Gastrocnemius medialis (tissue), 4 donors: ENCODE measurements at regions of chr9 and their contacts with region 1.

Region 1: GRCh38 chr9:127199001-127199791 is 65.4 kb upstream of the GARNL3 start:
- DNase-seq: peak; percentile 47 to 73
- ATAC-seq: peak; percentile 69 to 75
- H3K4me3 ChIP-seq: no peak overlapping the region
- H3K27ac ChIP-seq: peak overlapping the region in 2 of 4 donors; percentile 7 to 51
- H3K4me1 ChIP-seq: peaks cover 29 to 41% of the 10 kb centered on the region in 2 donors
- H3K27me3 ChIP-seq: no peaks in the 10 kb centered on the region
- CTCF ChIP-seq: peak; percentile 87 to 99 (median 94)
- POLR2A ChIP-seq: no peak

Region 2: DNA sequence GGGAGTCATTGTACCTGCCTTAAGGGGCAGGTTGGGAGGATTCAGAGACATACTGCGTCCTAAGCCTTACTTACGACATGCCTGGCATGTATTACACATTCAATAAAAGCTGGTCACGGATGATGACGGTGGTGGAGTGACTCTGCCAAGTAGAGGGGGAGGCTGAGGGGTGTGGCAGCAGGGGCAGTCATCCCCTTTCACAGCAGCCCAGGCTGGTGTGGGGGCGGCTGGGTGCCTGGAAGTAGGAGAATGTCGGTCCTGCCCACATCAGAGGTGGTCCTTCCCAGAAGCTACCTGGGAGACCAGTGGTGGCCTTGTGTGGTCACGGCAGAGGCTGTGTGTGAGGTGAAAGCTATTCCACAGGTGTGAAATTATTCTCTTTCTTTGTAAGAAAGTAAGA is 329.8 kb before region 1 on chr9:
- in situ Hi-C with region 1: no loop called
- intact Hi-C with region 1: no loop called
- DNase-seq: no peak
- ATAC-seq: no peak
- H3K4me3 ChIP-seq: no peak overlapping the region
- H3K27ac ChIP-seq: no peak overlapping the region
- H3K4me1 ChIP-seq: peaks cover 47% of the 10 kb centered on the region in 2 donors
- H3K27me3 ChIP-seq: no peaks in the 10 kb centered on the region
- CTCF ChIP-seq: no peak
- POLR2A ChIP-seq: no peak

Region 3: DNA sequence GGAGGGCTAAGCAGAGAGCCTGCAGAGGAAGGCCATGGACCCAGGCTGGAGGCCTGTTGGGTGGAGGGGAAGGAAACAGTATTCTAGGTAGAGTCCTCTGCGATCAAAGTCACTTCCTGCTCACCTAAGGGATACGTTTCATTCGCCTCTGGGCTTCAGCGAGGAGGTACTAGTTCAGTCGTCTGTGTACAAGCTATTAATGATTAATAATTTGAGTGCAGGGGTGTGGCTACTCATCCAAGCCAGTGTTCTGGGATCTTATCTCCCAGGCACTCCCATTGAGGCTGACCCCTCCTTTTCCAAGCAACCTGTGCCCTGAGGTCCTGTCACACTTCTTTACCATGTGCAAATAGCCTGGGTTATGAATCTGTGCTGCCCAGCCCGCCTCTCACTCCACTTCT is 259.4 kb before region 1 on chr9:
- in situ Hi-C with region 1: loop called (anchors 5 kb)
- intact Hi-C with region 1: loop called (anchors 1 kb)
- DNase-seq: no peak
- ATAC-seq: no peak
- H3K4me3 ChIP-seq: no peak overlapping the region
- H3K27ac ChIP-seq: no peak overlapping the region
- H3K4me1 ChIP-seq: peaks cover 0 to 14% of the 10 kb centered on the region in 2 donors
- H3K27me3 ChIP-seq: no peaks in the 10 kb centered on the region
- CTCF ChIP-seq: no peak
- POLR2A ChIP-seq: no peak

Region 4: GRCh38 chr9:126965541-126966428 is 233.4 kb before region 1 on chr9:
- in situ Hi-C with region 1: no loop called
- intact Hi-C with region 1: loop called (anchors 2 kb)
- DNase-seq: peak; percentile 24 to 66
- ATAC-seq: peak; percentile 80 to 93
- H3K4me3 ChIP-seq: no peak overlapping the region
- H3K27ac ChIP-seq: peak overlapping the region in 2 of 4 donors; percentile 16 to 29
- H3K4me1 ChIP-seq: peaks cover 19 to 41% of the 10 kb centered on the region in 2 donors
- H3K27me3 ChIP-seq: no peaks in the 10 kb centered on the region
- CTCF ChIP-seq: peak; percentile 71 to 84 (median 80)
- POLR2A ChIP-seq: no peak

Region 5: DNA sequence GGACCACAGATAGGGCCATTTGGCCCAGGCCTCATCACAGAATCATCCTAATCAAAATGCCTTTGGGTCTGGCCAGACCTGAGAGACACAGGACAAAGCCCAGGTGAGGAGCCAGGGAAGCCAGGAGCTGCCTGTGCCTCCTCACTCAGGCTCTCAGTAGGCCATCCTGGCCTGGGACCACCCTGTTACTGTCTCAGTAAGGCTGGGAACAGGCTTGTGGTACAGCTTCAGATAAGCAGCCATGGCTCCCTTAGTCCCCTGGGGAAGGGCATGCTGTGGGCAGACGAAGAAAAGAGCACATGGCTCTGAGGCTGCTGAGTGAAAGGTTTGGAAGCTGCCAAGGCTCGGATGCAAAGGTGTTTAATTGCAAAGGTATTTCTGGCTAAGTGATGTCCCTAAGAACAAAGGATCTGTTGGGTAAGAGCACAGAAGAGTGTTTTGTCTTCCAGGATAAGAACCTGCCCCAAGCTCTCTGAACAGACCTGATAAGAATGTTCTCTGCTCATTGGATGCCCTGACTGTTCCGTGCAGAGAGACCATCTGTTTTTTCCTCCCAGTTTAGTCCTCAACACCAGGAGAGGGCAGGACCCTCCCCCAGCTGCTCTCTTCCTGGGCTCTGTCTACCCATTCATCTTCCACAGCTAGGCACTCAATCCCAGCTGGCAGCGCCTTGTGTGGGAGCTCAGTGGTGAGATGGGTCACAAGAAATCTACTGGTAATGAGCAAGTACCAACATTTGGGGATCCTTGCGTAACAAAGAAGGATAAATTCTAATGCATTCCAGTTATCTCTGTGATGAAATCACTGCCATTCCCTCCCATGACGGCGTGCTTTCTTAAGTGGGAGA is 94.5 kb before region 1 on chr9:
- in situ Hi-C with region 1: no loop called
- intact Hi-C with region 1: loop called (anchors 5 kb)
- DNase-seq: no peak
- ATAC-seq: peak in 1 of 2 donors; percentile 4
- H3K4me3 ChIP-seq: no peak overlapping the region
- H3K27ac ChIP-seq: peak overlapping the region in 3 of 4 donors; percentile 12 to 24 (median 15)
- H3K4me1 ChIP-seq: peaks cover 17 to 42% of the 10 kb centered on the region in 2 donors
- H3K27me3 ChIP-seq: no peaks in the 10 kb centered on the region
- CTCF ChIP-seq: no peak
- POLR2A ChIP-seq: no peak